ENCODE measurements at regions of chr5 and their contacts with region 1.

Region 1: GRCh38 chr5:108748401-108749127 is 867 bp downstream of the FER start:
- DNase-seq: peak; percentile 97 to 98
- ATAC-seq: peak; percentile 87 to 98 (median 92)
- H3K4me3 ChIP-seq: peak overlapping the region; percentile 88
- H3K4me3 Mint-ChIP-seq: peak overlapping the region; percentile 96
- H3K27ac ChIP-seq: peak overlapping the region; percentile 92
- H3K27ac Mint-ChIP-seq: peak overlapping the region; percentile 91 to 95
- H3K4me1 ChIP-seq: peaks cover 12% of the 10 kb centered on the region
- H3K4me1 Mint-ChIP-seq: peaks cover 21% of the 10 kb centered on the region in 2 donors
- H3K27me3 ChIP-seq: no peaks in the 10 kb centered on the region
- H3K27me3 Mint-ChIP-seq: no peaks in the 10 kb centered on the region
- CTCF ChIP-seq: no peak

Region 2: DNA sequence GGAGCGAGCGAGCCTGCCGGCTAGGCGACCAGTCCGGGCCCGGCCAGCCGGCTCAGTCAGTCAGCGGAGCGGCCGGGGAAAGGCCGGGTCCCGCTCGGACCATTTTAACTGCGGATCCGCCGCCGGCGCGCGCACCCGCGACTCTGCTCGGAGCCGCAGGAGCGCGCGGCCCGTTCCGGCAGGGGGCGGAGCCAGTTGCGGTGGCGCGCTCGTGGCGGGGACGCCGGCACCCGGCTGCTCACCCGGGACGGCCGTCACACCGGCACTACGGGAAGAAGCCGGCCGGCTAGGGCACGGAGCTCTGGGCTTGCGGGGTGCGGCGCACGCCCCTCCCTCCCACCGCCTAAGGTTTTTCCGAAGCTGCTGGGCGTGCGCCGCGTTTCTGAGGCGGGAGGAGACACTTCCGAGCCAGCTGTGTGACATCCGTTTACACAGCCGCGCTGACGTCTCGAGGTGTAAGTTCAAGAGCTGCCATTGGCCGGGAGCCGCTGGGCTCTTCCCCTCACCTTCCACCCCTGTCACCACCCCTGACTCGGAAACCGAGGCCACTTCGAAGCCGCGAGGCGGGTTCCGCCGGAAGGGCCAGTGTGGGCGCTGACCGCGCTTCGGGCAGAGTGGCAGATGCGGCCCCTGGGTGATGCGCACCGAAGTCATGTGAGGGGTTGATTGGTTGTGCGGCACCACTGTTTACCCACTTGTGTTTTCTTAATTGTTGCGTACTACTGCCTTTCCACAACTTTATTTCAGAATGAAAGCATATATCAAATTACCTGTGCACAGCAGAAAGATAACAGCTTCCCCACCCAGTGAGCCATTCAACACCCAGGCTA is 366.4 kb before region 1 on chr5 and contains the start of gene FBXL17:
- intact Hi-C with region 1: loop called (anchors 5 kb)
- DNase-seq: peak; percentile 90 to 97
- ATAC-seq: peak; percentile 76 to 91 (median 79)
- H3K4me3 ChIP-seq: peak within 1 kb of the TSS; percentile 62
- H3K4me3 Mint-ChIP-seq: peak within 1 kb of the TSS; percentile 89
- H3K27ac ChIP-seq: peak within 1 kb of the TSS; percentile 95
- H3K27ac Mint-ChIP-seq: peak within 1 kb of the TSS; percentile 93 to 94
- H3K4me1 ChIP-seq: peaks cover 8% of the 10 kb centered on the region
- H3K4me1 Mint-ChIP-seq: peaks cover 39 to 41% of the 10 kb centered on the region in 2 donors
- H3K27me3 ChIP-seq: no peaks in the 10 kb centered on the region
- H3K27me3 Mint-ChIP-seq: peaks cover 0 to 2% of the 10 kb centered on the region in 2 donors
- CTCF ChIP-seq: no peak
- total RNA-seq, gene FBXL17: 34.2 to 46.8 (median 34.9) TPM

Region 3: GRCh38 chr5:108625654-108626053 is 122.9 kb before region 1 on chr5:
- intact Hi-C with region 1: no loop called
- DNase-seq: no peak
- ATAC-seq: no peak
- H3K4me3 ChIP-seq: no peak overlapping the region
- H3K4me3 Mint-ChIP-seq: no peak overlapping the region
- H3K27ac ChIP-seq: no peak overlapping the region
- H3K27ac Mint-ChIP-seq: no peak overlapping the region
- H3K4me1 ChIP-seq: no peaks in the 10 kb centered on the region
- H3K4me1 Mint-ChIP-seq: no peaks in the 10 kb centered on the region
- H3K27me3 ChIP-seq: no peaks in the 10 kb centered on the region
- H3K27me3 Mint-ChIP-seq: peaks cover 5 to 7% of the 10 kb centered on the region in 2 donors
- CTCF ChIP-seq: no peak

Region 4: DNA sequence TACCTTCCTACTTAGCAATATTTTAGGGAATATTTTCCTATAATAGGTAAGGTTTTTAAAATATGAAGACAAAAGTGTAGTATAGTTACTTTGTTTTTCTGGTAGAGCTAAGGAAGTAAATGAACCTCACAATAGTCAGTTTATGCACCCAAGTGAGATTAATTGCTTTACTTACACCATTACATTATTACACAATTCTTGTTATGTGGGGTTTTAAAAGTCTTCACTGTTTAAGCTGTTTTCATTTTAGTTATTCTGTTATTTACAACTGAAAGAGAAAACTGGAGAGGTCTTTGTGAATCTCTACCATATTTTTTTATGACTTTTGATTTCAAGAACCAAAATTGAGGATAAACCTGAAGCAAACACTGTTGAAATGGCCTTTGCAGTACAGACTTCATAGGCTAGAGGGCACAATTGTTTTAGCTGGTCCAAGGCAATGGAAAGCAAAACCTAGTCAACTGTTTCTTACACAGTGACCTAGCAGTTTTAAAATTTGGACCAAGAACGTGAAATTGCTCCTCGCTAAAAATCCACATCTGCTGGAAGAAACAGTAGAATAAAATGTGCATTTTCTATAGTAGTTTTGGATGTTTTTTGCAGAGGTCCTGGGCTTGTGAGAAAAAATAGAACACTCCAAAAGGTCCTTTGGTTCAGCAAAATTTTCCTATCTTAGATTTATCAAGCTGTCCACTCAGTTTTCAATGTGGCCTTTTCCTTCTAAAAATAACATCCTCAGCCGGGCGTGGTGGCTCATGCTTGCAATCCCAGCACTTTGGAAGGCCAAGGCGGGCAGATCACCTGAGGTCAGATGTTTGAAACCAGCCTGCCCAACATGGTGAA is 67.3 kb before region 1 on chr5:
- intact Hi-C with region 1: loop called (anchors 5 kb)
- DNase-seq: peak in 1 of 2 donors; percentile 71
- ATAC-seq: peak; percentile 79 to 89 (median 88)
- H3K4me3 ChIP-seq: no peak overlapping the region
- H3K4me3 Mint-ChIP-seq: no peak overlapping the region
- H3K27ac ChIP-seq: no peak overlapping the region
- H3K27ac Mint-ChIP-seq: no peak overlapping the region
- H3K4me1 ChIP-seq: no peaks in the 10 kb centered on the region
- H3K4me1 Mint-ChIP-seq: no peaks in the 10 kb centered on the region
- H3K27me3 ChIP-seq: no peaks in the 10 kb centered on the region
- H3K27me3 Mint-ChIP-seq: no peaks in the 10 kb centered on the region
- CTCF ChIP-seq: peak; percentile 71

Region 5: GRCh38 chr5:108727651-108728565 is 20.7 kb before region 1 on chr5:
- intact Hi-C with region 1: loop called (anchors 1 kb)
- DNase-seq: peak; percentile 53 to 61
- ATAC-seq: peak; percentile 77 to 89 (median 80)
- H3K4me3 ChIP-seq: peak overlapping the region; percentile 96
- H3K4me3 Mint-ChIP-seq: peak overlapping the region; percentile 87
- H3K27ac ChIP-seq: peak overlapping the region; percentile 91
- H3K27ac Mint-ChIP-seq: peak overlapping the region; percentile 77 to 82
- H3K4me1 ChIP-seq: peaks cover 10% of the 10 kb centered on the region
- H3K4me1 Mint-ChIP-seq: peaks cover 25 to 33% of the 10 kb centered on the region in 2 donors
- H3K27me3 ChIP-seq: no peaks in the 10 kb centered on the region
- H3K27me3 Mint-ChIP-seq: peaks cover 0 to 5% of the 10 kb centered on the region in 2 donors
- CTCF ChIP-seq: no peak

Region 6: DNA sequence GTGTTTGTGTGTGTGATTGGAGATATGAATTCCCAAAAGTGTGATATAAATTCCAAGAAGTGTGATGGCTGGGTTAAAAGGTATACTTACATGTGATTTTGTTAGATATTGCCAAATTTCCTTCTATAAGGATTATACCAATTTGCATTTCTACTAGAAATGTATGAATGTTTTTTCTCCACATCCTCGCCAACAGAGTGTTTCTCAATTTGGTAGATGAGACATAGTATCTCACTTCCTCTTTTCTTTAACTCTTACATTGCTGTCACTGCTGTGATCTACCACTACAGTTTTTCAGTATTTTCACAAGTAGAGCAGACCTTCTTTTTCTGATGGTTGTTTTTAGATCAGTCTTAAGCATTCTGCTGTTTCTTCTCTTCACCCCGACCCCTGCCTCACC is 110.4 kb after region 1 on chr5:
- intact Hi-C with region 1: no loop called
- DNase-seq: no peak
- ATAC-seq: no peak
- H3K4me3 ChIP-seq: no peak overlapping the region
- H3K4me3 Mint-ChIP-seq: no peak overlapping the region
- H3K27ac ChIP-seq: no peak overlapping the region
- H3K27ac Mint-ChIP-seq: no peak overlapping the region
- H3K4me1 ChIP-seq: no peaks in the 10 kb centered on the region
- H3K4me1 Mint-ChIP-seq: peaks cover 0 to 6% of the 10 kb centered on the region in 2 donors
- H3K27me3 ChIP-seq: no peaks in the 10 kb centered on the region
- H3K27me3 Mint-ChIP-seq: no peaks in the 10 kb centered on the region
- CTCF ChIP-seq: no peak